ENCODE measurements at regions of chr5 and their contacts with region 1.

Region 1: DNA sequence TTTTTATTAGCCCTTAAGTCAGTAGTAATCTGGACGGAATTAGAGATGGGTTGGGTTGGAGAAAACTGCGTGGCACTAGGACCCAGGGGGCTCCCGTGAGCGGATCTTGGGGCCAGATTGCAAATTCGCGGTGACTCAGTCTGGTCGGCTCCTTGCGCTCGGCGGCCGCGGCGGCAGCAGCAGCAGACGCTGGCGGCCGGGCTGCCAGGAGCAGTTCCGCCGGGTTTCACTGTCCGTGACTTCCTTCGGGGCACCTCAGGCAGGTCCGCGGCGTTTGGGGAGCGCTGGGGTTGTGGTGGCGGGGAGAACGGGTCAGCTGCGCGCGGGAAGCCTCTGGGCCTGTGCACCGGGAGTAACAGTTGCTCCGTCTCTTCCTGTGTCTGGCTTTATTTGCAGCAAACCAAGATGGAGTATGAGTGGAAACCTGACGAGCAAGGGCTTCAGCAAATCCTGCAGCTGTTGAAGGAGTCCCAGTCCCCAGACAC is 31.6 kb downstream of the TNPO1 start:
- DNase-seq: peak; percentile 89 to 91
- H3K4me3 ChIP-seq: peak overlapping the region; percentile 62
- H3K4me3 Mint-ChIP-seq: peak overlapping the region; percentile 98
- H3K27ac Mint-ChIP-seq: peak overlapping the region; percentile 94
- H3K4me1 ChIP-seq: no peaks in the 10 kb centered on the region; the same call in 1 of the 2 replicates
- H3K4me1 Mint-ChIP-seq: peaks cover 15% of the 10 kb centered on the region
- H3K27me3 ChIP-seq: no peaks in the 10 kb centered on the region
- H3K27me3 Mint-ChIP-seq: no peaks in the 10 kb centered on the region
- CTCF ChIP-seq: peak in 1 of 2 experiments; percentile 22

Region 2: DNA sequence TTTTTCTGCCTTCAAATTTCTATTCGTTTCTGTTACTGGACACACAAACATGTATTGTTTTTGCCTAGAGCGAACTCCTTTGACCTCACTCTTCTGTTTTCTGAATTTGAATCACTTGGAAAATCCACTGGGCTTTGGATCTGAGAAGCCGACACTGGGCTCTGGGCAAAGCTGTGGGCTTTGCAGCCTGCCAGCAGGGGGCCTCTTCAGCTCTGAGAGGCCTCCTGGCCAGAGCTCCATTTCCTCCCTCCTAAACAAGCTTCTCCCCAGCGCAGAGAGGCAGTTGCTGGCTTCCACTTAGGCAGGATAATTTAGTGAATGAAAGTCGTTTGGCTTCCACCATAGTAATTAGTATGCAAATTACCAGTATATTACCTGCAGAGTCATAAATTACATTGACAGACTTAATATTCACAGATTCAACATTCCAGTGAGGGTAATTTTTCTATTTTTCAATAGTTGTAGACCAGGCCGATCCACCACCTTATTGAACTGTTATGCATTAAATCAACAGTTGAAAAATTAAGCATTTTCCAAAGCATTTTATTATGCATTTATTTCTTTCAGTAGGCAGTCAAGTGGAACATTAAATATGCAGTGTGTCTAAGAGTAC is 236.8 kb before region 1 on chr5:
- CTCF ChIA-PET with region 1: interaction called, 4 read pairs
- POLR2A ChIA-PET with region 1: no interaction called
- intact Hi-C with region 1: loop called (anchors 10 kb)
- DNase-seq: peak; percentile 63 to 73
- H3K4me3 ChIP-seq: no peak overlapping the region
- H3K4me3 Mint-ChIP-seq: no peak overlapping the region
- H3K27ac Mint-ChIP-seq: no peak overlapping the region
- H3K4me1 ChIP-seq: no peaks in the 10 kb centered on the region
- H3K4me1 Mint-ChIP-seq: peaks cover 5% of the 10 kb centered on the region
- H3K27me3 ChIP-seq: no peaks in the 10 kb centered on the region
- H3K27me3 Mint-ChIP-seq: peaks cover 2% of the 10 kb centered on the region
- CTCF ChIP-seq: peak; percentile 92 to 98

Region 3: GRCh38 chr5:72788866-72789505 is 59.0 kb before region 1 on chr5:
- CTCF ChIA-PET with region 1: no interaction called
- POLR2A ChIA-PET with region 1: no interaction called
- intact Hi-C with region 1: no loop called
- DNase-seq: peak; percentile 22 to 31
- H3K4me3 ChIP-seq: no peak overlapping the region
- H3K4me3 Mint-ChIP-seq: no peak overlapping the region
- H3K27ac Mint-ChIP-seq: peak overlapping the region; percentile 49
- H3K4me1 ChIP-seq: peaks cover 22% of the 10 kb centered on the region
- H3K4me1 Mint-ChIP-seq: peaks cover 18% of the 10 kb centered on the region
- H3K27me3 ChIP-seq: no peaks in the 10 kb centered on the region
- H3K27me3 Mint-ChIP-seq: no peaks in the 10 kb centered on the region
- CTCF ChIP-seq: no peak

Measured in Caco-2 (cell line).